Activated B cell treated with CpG ODN at 0.5 μM for 24 hours (primary cell): ENCODE measurements at regions of chr5 and their contacts with region 1.

Region 1: GRCh38 chr5:172881691-172882370 is 47.8 kb downstream of the ERGIC1 start:
- DNase-seq: no peak
- ATAC-seq: peak; percentile 73
- H3K4me3 Mint-ChIP-seq: no peak overlapping the region
- H3K27ac Mint-ChIP-seq: peak overlapping the region; percentile 75
- H3K4me1 Mint-ChIP-seq: peaks cover 22% of the 10 kb centered on the region
- H3K27me3 Mint-ChIP-seq: no peaks in the 10 kb centered on the region
- CTCF ChIP-seq: no peak

Region 2: GRCh38 chr5:172902497-172903200 is 20.8 kb after region 1 on chr5:
- CTCF ChIA-PET with region 1: no interaction called
- POLR2A ChIA-PET with region 1: no interaction called
- intact Hi-C with region 1: no loop called
- DNase-seq: no peak
- ATAC-seq: no peak
- H3K4me3 Mint-ChIP-seq: no peak overlapping the region
- H3K27ac Mint-ChIP-seq: no peak overlapping the region
- H3K4me1 Mint-ChIP-seq: peaks cover 3% of the 10 kb centered on the region
- H3K27me3 Mint-ChIP-seq: no peaks in the 10 kb centered on the region
- CTCF ChIP-seq: no peak

Region 3: DNA sequence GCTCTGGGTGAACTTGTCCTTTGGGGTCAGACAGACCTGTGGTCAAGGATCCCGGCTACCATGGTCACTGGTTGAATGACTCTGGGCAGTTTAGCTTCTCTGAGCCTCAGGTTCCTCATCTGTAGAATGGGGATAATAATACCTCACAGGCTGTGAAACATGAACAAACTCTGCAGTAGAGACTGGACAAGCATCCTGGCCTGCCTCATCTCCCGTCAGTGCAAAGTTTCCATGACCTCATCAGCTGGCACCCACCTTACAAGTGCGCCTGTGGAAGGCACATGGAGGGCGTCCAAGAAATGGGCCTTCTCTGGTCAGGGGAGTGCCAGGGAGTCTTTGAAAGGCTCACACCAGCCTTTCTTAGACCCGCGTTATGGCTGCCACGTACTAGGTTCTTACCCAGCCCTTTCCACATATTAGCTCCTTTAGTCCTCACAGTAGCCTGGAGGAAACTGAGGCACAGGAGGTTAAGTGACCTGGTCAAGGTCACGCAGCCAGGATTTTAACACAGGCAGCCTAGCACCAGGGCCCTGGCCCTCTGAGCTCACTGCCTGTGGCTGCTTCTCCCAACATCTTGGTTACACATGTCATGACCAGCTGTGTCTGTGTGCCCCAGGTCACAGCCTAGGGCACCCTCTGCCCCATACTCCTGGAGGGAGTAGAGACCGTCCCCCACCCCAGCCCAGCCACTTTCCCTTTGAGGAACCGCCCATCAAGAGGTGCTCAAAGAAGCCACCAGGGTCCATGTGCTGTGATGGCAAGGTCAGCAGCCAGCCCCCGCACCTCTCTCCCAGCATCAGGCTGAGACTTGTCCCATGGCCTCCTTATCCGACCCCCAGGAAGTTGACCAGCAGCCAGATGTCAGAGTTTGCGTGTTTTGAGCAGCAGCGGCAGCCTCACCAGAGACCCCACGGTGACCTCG is 38.0 kb after region 1 on chr5:
- CTCF ChIA-PET with region 1: no interaction called
- POLR2A ChIA-PET with region 1: no interaction called
- intact Hi-C with region 1: loop called (anchors 5 kb)
- DNase-seq: no peak
- ATAC-seq: no peak
- H3K4me3 Mint-ChIP-seq: no peak overlapping the region
- H3K27ac Mint-ChIP-seq: no peak overlapping the region
- H3K4me1 Mint-ChIP-seq: peaks cover 13% of the 10 kb centered on the region
- H3K27me3 Mint-ChIP-seq: no peaks in the 10 kb centered on the region
- CTCF ChIP-seq: no peak